AG04450 (cell line): ENCODE measurements at regions of chr2 and their contacts with region 1.

Region 1: GRCh38 chr2:147937744-147938349 is 82.7 kb downstream of the ORC4 start:
- DNase-seq: no peak
- H3K4me3 ChIP-seq: no peak overlapping the region
- H3K27ac ChIP-seq: no peak overlapping the region
- H3K27me3 ChIP-seq: no peaks in the 10 kb centered on the region
- CTCF ChIP-seq: peak; percentile 91

Region 2: GRCh38 chr2:147008481-147008880 is 929.4 kb before region 1 on chr2:
- CTCF ChIA-PET with region 1: no interaction called
- POLR2A ChIA-PET with region 1: no interaction called
- DNase-seq: no peak
- H3K4me3 ChIP-seq: no peak overlapping the region
- H3K27ac ChIP-seq: no peak overlapping the region
- H3K27me3 ChIP-seq: no peaks in the 10 kb centered on the region
- CTCF ChIP-seq: no peak

Region 3: GRCh38 chr2:148194882-148195281 is 257.0 kb after region 1 on chr2:
- CTCF ChIA-PET with region 1: no interaction called
- POLR2A ChIA-PET with region 1: no interaction called
- DNase-seq: no peak
- H3K4me3 ChIP-seq: no peak overlapping the region
- H3K27ac ChIP-seq: no peak overlapping the region
- H3K27me3 ChIP-seq: no peaks in the 10 kb centered on the region
- CTCF ChIP-seq: no peak

Region 4: GRCh38 chr2:148989882-148990493 is 1052.1 kb after region 1 on chr2:
- CTCF ChIA-PET with region 1: interaction called, 11 read pairs
- POLR2A ChIA-PET with region 1: no interaction called
- DNase-seq: peak; percentile 44
- H3K4me3 ChIP-seq: no peak overlapping the region
- H3K27ac ChIP-seq: no peak overlapping the region
- H3K27me3 ChIP-seq: peaks cover 5% of the 10 kb centered on the region
- CTCF ChIP-seq: peak; percentile 75